GM12878 (cell line): ENCODE measurements at regions of chr5 and their contacts with region 1.

Region 1: GRCh38 chr5:150436141-150436680 is 13.3 kb downstream of the RPS14 start:
- DNase-seq: peak; percentile 60
- ATAC-seq: peak; percentile 96
- H3K4me3 ChIP-seq: no peak overlapping the region
- H3K27ac ChIP-seq: no peak overlapping the region
- H3K4me1 ChIP-seq: peaks cover 5% of the 10 kb centered on the region
- H3K27me3 ChIP-seq: no peaks in the 10 kb centered on the region
- CTCF ChIP-seq: peak; percentile 80 to 94 (median 83)
- EP300 ChIP-seq: no peak
- POLR2A ChIP-seq: no peak
- RAD21 ChIP-seq: peak; percentile 87

Region 2: GRCh38 chr5:149567226-149567625 is 869.0 kb before region 1 on chr5:
- CTCF ChIA-PET with region 1: no interaction called
- POLR2A ChIA-PET with region 1: no interaction called
- RAD21 ChIA-PET with region 1: no interaction called
- SMC1A ChIA-PET with region 1: no interaction called
- in situ Hi-C with region 1: no loop called
- intact Hi-C with region 1: no loop called
- DNase-seq: no peak
- ATAC-seq: peak; percentile 45
- H3K4me3 ChIP-seq: no peak overlapping the region
- H3K27ac ChIP-seq: no peak overlapping the region
- H3K4me1 ChIP-seq: no peaks in the 10 kb centered on the region
- H3K27me3 ChIP-seq: no peaks in the 10 kb centered on the region
- CTCF ChIP-seq: no peak
- EP300 ChIP-seq: no peak
- POLR2A ChIP-seq: no peak
- RAD21 ChIP-seq: no peak

Region 3: GRCh38 chr5:150129813-150130492 is 306.3 kb before region 1 on chr5:
- CTCF ChIA-PET with region 1: no interaction called
- POLR2A ChIA-PET with region 1: no interaction called
- RAD21 ChIA-PET with region 1: no interaction called
- SMC1A ChIA-PET with region 1: interaction called, 3 read pairs
- in situ Hi-C with region 1: no loop called
- intact Hi-C with region 1: loop called (anchors 1 kb)
- DNase-seq: no peak
- ATAC-seq: peak; percentile 93
- H3K4me3 ChIP-seq: no peak overlapping the region
- H3K27ac ChIP-seq: no peak overlapping the region
- H3K4me1 ChIP-seq: no peaks in the 10 kb centered on the region
- H3K27me3 ChIP-seq: no peaks in the 10 kb centered on the region
- CTCF ChIP-seq: peak; percentile 88 to 92 (median 91)
- EP300 ChIP-seq: no peak
- POLR2A ChIP-seq: no peak
- RAD21 ChIP-seq: peak; percentile 92

Region 4: DNA sequence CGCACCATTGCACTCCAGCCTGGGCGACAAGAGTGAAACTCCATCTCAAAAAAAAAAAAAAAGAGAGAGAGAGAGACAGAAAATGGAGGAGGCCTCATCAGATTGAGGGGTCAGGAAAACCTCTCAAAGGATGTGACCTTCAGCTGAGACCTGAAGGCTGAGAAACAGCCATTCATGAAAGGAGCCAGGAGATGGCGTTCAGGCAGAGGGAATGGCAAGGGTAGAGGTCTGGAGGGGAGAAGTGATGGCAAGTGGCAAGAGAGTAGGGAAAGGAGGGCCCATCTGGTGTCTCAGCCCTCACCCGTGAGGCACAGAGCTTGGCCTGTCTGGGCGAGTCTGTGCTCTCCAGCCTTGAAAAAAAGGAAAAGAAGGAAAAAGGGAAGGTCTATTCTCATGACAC is 163.7 kb before region 1 on chr5:
- CTCF ChIA-PET with region 1: interaction called, 6 read pairs
- POLR2A ChIA-PET with region 1: no interaction called
- RAD21 ChIA-PET with region 1: interaction called, 4 read pairs
- SMC1A ChIA-PET with region 1: interaction called, 3 read pairs
- in situ Hi-C with region 1: no loop called
- intact Hi-C with region 1: loop called (anchors 1 kb)
- DNase-seq: no peak
- ATAC-seq: peak; percentile 83
- H3K4me3 ChIP-seq: no peak overlapping the region
- H3K27ac ChIP-seq: no peak overlapping the region
- H3K4me1 ChIP-seq: no peaks in the 10 kb centered on the region
- H3K27me3 ChIP-seq: peaks cover 3 to 4% of the 10 kb centered on the region in 2 experiments; a peak in 3 of 4 replicates
- CTCF ChIP-seq: peak; percentile 36 to 50 (median 45); a peak in 4 of 6 replicates
- EP300 ChIP-seq: no peak
- POLR2A ChIP-seq: no peak
- RAD21 ChIP-seq: peak; percentile 69

Region 5: DNA sequence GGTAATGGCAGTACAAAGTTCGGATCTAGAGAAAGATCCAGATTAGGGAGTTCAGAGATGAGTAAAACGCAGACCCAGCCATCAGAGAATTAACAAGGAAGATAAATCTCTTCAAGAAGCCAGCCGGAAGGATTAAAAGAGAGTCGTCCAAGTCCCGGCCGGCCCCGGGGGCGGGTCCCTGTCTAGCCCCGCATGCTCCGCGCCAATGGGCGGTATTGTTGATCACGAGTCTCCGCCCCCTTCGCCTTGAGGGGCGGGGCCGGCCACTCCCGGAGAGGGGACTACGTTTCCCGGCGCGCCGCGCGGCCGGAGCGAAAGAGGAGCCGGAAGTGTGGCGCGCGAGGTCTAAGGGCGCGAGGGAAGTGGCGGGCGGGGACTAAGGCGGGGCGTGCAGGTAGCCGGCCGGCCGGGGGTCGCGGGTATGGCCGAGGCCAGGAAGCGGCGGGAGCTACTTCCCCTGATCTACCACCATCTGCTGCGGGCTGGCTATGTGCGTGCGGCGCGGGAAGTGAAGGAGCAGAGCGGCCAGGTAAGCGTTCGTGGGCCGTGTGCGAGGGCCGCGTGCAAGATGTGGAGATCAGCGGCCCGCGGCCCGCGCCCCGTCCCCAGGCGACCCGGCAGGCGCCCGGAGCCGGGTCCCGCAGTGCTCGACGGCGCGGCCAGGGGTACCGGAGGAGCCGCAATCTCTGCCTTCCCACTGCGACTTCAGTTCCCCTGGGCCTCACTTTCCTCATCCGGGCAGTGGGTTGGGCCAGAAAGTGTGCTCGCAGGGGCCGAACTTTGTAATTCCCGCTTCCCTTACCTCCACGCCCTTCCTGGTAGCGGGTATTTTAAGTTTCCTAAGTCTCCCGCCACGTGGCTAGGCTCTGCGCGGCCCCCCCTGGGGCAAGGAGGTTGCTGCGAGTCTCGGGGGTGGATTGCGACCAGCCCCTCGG is 78.6 kb before region 1 on chr5 and contains the start of gene TCOF1:
- CTCF ChIA-PET with region 1: interaction called, 13 read pairs
- POLR2A ChIA-PET with region 1: interaction called, 3 read pairs
- RAD21 ChIA-PET with region 1: interaction called, 6 read pairs
- SMC1A ChIA-PET with region 1: interaction called, 4 read pairs
- in situ Hi-C with region 1: no loop called
- intact Hi-C with region 1: loop called (anchors 10 kb)
- DNase-seq: peak; percentile 78
- ATAC-seq: peak; percentile 93
- H3K4me3 ChIP-seq: peak within 1 kb of the TSS; percentile 96
- H3K27ac ChIP-seq: peak within 1 kb of the TSS; percentile 82
- H3K4me1 ChIP-seq: peaks cover 25% of the 10 kb centered on the region
- H3K27me3 ChIP-seq: no peaks in the 10 kb centered on the region
- CTCF ChIP-seq: no peak
- EP300 ChIP-seq: no peak
- POLR2A ChIP-seq: peak; percentile 82
- RAD21 ChIP-seq: no peak
- polyA plus RNA-seq, gene TCOF1: 8.7 to 12.3 TPM

Region 6: GRCh38 chr5:150409638-150410523 is 26.3 kb before region 1 on chr5:
- CTCF ChIA-PET with region 1: interaction called, 274 read pairs
- POLR2A ChIA-PET with region 1: interaction called, 44 read pairs
- RAD21 ChIA-PET with region 1: interaction called, 49 read pairs
- SMC1A ChIA-PET with region 1: interaction called, 11 read pairs
- in situ Hi-C with region 1: no loop called
- intact Hi-C with region 1: loop called (anchors 1 kb)
- DNase-seq: peak; percentile 84
- ATAC-seq: peak; percentile 13
- H3K4me3 ChIP-seq: peak overlapping the region; percentile 99
- H3K27ac ChIP-seq: peak overlapping the region; percentile 100
- H3K4me1 ChIP-seq: peaks cover 32% of the 10 kb centered on the region
- H3K27me3 ChIP-seq: no peaks in the 10 kb centered on the region
- CTCF ChIP-seq: no peak
- EP300 ChIP-seq: no peak
- POLR2A ChIP-seq: peak; percentile 89
- RAD21 ChIP-seq: no peak

Region 7: GRCh38 chr5:150573867-150574817 is 137.9 kb after region 1 on chr5:
- CTCF ChIA-PET with region 1: no interaction called
- POLR2A ChIA-PET with region 1: no interaction called
- RAD21 ChIA-PET with region 1: no interaction called
- SMC1A ChIA-PET with region 1: no interaction called
- in situ Hi-C with region 1: no loop called
- intact Hi-C with region 1: no loop called
- DNase-seq: no peak
- ATAC-seq: peak; percentile 54
- H3K4me3 ChIP-seq: no peak overlapping the region
- H3K27ac ChIP-seq: no peak overlapping the region
- H3K4me1 ChIP-seq: no peaks in the 10 kb centered on the region
- H3K27me3 ChIP-seq: no peaks in the 10 kb centered on the region
- CTCF ChIP-seq: peak in 2 of 3 experiments; percentile 9 to 24; a peak in 1 of 6 replicates
- EP300 ChIP-seq: no peak
- POLR2A ChIP-seq: no peak
- RAD21 ChIP-seq: no peak